GM12878 (cell line): ENCODE measurements at regions of chr16 and their contacts with region 1.

Region 1: DNA sequence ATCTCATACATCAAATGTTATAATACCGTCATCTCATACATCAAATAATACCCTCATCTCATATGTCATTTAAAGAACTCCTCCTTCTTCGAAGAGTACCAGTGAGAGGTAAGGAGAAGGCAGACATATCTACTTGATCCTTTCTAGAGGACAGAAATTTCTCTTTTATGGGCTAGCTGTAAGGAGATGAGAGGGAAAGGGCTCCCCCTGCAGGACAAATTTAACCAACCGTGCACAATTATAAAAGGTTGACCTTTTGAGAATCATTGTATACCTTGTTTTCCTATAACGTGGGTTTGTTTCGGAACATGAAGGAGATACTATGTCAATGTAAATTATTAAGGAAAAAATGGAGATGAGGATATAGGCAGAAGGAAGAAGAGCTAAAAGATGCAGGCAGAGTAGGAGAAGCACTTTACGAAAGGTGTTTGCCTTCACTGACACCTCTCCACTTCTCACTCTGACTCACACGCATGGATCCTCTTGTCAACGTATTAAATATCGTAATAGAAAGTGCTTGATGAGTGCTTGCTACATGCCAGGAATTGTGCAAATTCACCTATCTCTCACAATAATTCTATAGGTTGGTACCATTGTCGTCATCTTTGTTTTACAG is 465.9 kb upstream of the ERCC4 start:
- DNase-seq: no peak
- ATAC-seq: peak; percentile 73
- H3K4me3 ChIP-seq: no peak overlapping the region
- H3K27ac ChIP-seq: no peak overlapping the region
- H3K4me1 ChIP-seq: no peaks in the 10 kb centered on the region
- H3K27me3 ChIP-seq: no peaks in the 10 kb centered on the region; a peak in 1 of 4 replicates
- CTCF ChIP-seq: peak; percentile 45 to 64 (median 51); a peak in 5 of 6 replicates
- EP300 ChIP-seq: no peak
- POLR2A ChIP-seq: no peak
- RAD21 ChIP-seq: peak; percentile 86

Region 2: DNA sequence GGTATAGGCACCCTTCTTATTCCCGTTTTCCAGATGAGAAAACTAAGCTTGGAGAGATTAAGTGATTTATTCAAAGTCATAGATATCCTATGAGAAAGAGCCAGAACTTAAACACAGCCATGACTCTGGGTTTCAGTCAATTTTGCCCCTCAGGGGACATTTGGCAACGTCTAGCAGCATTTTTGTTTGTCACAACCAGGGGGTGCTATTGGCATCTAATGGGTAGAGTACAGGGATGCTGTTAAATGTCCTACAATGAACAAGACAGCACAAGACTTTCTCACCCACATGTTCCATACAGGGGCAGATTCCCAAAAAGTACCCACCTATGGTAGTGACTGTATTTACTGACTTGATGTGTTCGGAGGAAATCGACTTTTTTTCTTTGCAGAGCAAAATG is 557.5 kb before region 1 on chr16:
- CTCF ChIA-PET with region 1: interaction called, 26 read pairs
- POLR2A ChIA-PET with region 1: no interaction called
- RAD21 ChIA-PET with region 1: interaction called, 12 read pairs
- SMC1A ChIA-PET with region 1: interaction called, 19 read pairs
- in situ Hi-C with region 1: loop called (anchors 5 kb)
- intact Hi-C with region 1: loop called (anchors 5 kb)
- DNase-seq: no peak
- ATAC-seq: peak; percentile 89
- H3K4me3 ChIP-seq: no peak overlapping the region
- H3K27ac ChIP-seq: no peak overlapping the region
- H3K4me1 ChIP-seq: no peaks in the 10 kb centered on the region
- H3K27me3 ChIP-seq: peaks cover 0 to 9% of the 10 kb centered on the region in 2 experiments; a peak in 3 of 4 replicates
- CTCF ChIP-seq: peak; percentile 61 to 63 (median 63)
- EP300 ChIP-seq: no peak
- POLR2A ChIP-seq: no peak
- RAD21 ChIP-seq: peak; percentile 88

Region 3: GRCh38 chr16:13254998-13255614 is 198.9 kb before region 1 on chr16:
- CTCF ChIA-PET with region 1: interaction called, 3 read pairs
- POLR2A ChIA-PET with region 1: no interaction called
- RAD21 ChIA-PET with region 1: no interaction called
- SMC1A ChIA-PET with region 1: interaction called, 5 read pairs
- in situ Hi-C with region 1: no loop called
- intact Hi-C with region 1: loop called (anchors 10 kb)
- DNase-seq: peak; percentile 7
- ATAC-seq: peak; percentile 56
- H3K4me3 ChIP-seq: no peak overlapping the region
- H3K27ac ChIP-seq: peak overlapping the region; percentile 23
- H3K4me1 ChIP-seq: peaks cover 11% of the 10 kb centered on the region; the same call in 1 of the 2 replicates
- H3K27me3 ChIP-seq: no peaks in the 10 kb centered on the region
- CTCF ChIP-seq: no peak
- EP300 ChIP-seq: no peak
- POLR2A ChIP-seq: no peak
- RAD21 ChIP-seq: no peak

Region 4: DNA sequence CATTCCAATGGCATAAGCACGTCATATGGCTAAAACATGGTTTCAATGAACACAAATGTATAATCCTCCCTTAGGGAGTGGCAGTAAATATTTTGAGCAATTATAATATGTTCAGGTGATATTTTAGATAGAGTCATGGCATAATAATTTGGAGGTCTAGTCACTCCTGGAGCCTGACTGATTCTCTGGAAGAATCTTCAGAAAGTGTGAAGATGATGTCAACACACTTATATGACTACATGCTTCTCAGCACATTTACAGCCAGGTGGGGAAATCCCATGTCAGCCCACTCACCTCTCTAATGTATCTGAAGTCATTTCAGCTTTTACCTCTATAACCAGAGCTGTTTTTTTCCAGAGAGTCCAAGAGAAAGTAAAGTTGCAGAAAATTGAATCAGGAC is 77.9 kb before region 1 on chr16:
- CTCF ChIA-PET with region 1: interaction called, 10 read pairs
- POLR2A ChIA-PET with region 1: no interaction called
- RAD21 ChIA-PET with region 1: no interaction called
- SMC1A ChIA-PET with region 1: interaction called, 18 read pairs
- in situ Hi-C with region 1: no loop called
- intact Hi-C with region 1: no loop called
- DNase-seq: no peak
- ATAC-seq: peak; percentile 84
- H3K4me3 ChIP-seq: no peak overlapping the region
- H3K27ac ChIP-seq: no peak overlapping the region
- H3K4me1 ChIP-seq: no peaks in the 10 kb centered on the region; the same call in 1 of the 2 replicates
- H3K27me3 ChIP-seq: no peaks in the 10 kb centered on the region
- CTCF ChIP-seq: no peak
- EP300 ChIP-seq: peak in 1 of 2 experiments; percentile 29; a peak in 1 of 4 replicates
- POLR2A ChIP-seq: no peak
- RAD21 ChIP-seq: no peak

Region 5: DNA sequence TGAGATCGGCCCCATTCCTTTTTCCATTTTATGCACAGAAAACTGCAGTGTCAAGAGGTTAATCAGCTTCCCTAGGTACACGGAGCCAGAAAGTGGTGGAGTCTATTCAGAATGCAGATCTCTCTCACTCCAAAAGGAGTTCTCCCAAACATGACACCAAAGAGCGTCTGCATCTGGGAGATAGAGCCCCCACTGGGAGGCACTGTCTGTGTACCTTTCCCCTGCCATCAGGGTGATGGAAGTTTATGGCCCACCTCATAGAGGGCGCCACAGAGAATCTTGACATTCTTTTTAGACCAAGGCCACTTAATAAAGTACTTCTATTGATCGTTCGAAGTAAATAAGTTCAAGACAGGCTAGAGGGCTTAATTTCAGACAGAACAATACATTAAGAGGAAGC is 27.8 kb before region 1 on chr16:
- CTCF ChIA-PET with region 1: interaction called, 3 read pairs
- POLR2A ChIA-PET with region 1: no interaction called
- RAD21 ChIA-PET with region 1: interaction called, 3 read pairs
- SMC1A ChIA-PET with region 1: interaction called, 13 read pairs
- in situ Hi-C with region 1: no loop called
- intact Hi-C with region 1: no loop called
- DNase-seq: no peak
- ATAC-seq: peak; percentile 15; the same call in 1 of the 3 replicates
- H3K4me3 ChIP-seq: no peak overlapping the region
- H3K27ac ChIP-seq: no peak overlapping the region
- H3K4me1 ChIP-seq: no peaks in the 10 kb centered on the region; the same call in 1 of the 2 replicates
- H3K27me3 ChIP-seq: no peaks in the 10 kb centered on the region
- CTCF ChIP-seq: peak in 1 of 3 experiments; percentile 10; a peak in 1 of 6 replicates
- EP300 ChIP-seq: no peak
- POLR2A ChIP-seq: no peak
- RAD21 ChIP-seq: peak; percentile 39; the same call in 1 of the 2 replicates

Region 6: GRCh38 chr16:13702614-13703013 is 248.6 kb after region 1 on chr16:
- CTCF ChIA-PET with region 1: no interaction called
- POLR2A ChIA-PET with region 1: no interaction called
- RAD21 ChIA-PET with region 1: no interaction called
- SMC1A ChIA-PET with region 1: no interaction called
- in situ Hi-C with region 1: no loop called
- intact Hi-C with region 1: no loop called
- DNase-seq: no peak
- ATAC-seq: no peak
- H3K4me3 ChIP-seq: no peak overlapping the region
- H3K27ac ChIP-seq: no peak overlapping the region
- H3K4me1 ChIP-seq: no peaks in the 10 kb centered on the region
- H3K27me3 ChIP-seq: no peaks in the 10 kb centered on the region
- CTCF ChIP-seq: no peak
- EP300 ChIP-seq: no peak
- POLR2A ChIP-seq: no peak
- RAD21 ChIP-seq: no peak

Region 7: GRCh38 chr16:13767215-13767614 is 313.2 kb after region 1 on chr16:
- CTCF ChIA-PET with region 1: interaction called, 19 read pairs
- POLR2A ChIA-PET with region 1: no interaction called
- RAD21 ChIA-PET with region 1: interaction called, 4 read pairs
- SMC1A ChIA-PET with region 1: interaction called, 8 read pairs
- in situ Hi-C with region 1: no loop called
- intact Hi-C with region 1: no loop called
- DNase-seq: no peak
- ATAC-seq: peak; percentile 42; the same call in 2 of the 3 replicates
- H3K4me3 ChIP-seq: no peak overlapping the region
- H3K27ac ChIP-seq: no peak overlapping the region
- H3K4me1 ChIP-seq: no peaks in the 10 kb centered on the region
- H3K27me3 ChIP-seq: no peaks in the 10 kb centered on the region
- CTCF ChIP-seq: peak; percentile 10 to 42 (median 28); a peak in 3 of 6 replicates
- EP300 ChIP-seq: no peak
- POLR2A ChIP-seq: no peak
- RAD21 ChIP-seq: peak; percentile 58